MCF 10A (cell line): ENCODE measurements at regions of chr13 and their contacts with region 1.

Region 1: DNA sequence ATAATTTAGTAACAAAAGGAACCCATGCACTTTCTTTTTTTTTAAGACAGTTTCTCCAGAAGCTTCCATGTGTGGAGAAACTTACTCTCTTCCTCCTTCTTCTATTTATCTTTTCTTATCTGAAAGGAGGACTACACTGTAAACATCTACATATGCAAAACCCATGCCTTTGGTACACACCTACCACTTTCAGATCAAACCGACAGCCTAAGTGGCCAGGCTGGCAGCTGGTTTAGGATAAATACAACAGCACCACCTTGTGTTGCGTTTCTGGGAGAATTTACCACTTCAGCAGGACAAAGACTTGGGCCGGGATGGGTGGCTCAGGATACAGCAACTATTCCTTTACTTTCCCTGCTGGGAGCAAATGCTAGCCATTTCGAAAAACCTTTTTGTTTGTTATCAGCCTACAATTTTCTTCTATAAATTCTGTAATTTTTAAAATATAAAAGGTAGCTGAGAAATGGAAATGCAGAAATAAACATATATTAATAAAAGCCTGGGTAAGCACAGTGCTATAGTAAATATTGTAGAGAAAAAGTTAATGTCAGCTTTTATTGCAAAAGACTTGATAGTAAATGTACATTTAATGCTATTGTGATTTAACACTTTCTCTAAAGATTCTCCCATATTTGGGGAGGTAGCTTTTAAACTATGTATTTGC is 94.0 kb upstream of the RFC3 start:
- DNase-seq: peak; percentile 84
- H3K4me3 Mint-ChIP-seq: no peak overlapping the region
- H3K27ac Mint-ChIP-seq: no peak overlapping the region
- H3K4me1 Mint-ChIP-seq: peaks cover 15% of the 10 kb centered on the region
- H3K27me3 Mint-ChIP-seq: no peaks in the 10 kb centered on the region
- CTCF ChIP-seq: peak; percentile 78

Region 2: DNA sequence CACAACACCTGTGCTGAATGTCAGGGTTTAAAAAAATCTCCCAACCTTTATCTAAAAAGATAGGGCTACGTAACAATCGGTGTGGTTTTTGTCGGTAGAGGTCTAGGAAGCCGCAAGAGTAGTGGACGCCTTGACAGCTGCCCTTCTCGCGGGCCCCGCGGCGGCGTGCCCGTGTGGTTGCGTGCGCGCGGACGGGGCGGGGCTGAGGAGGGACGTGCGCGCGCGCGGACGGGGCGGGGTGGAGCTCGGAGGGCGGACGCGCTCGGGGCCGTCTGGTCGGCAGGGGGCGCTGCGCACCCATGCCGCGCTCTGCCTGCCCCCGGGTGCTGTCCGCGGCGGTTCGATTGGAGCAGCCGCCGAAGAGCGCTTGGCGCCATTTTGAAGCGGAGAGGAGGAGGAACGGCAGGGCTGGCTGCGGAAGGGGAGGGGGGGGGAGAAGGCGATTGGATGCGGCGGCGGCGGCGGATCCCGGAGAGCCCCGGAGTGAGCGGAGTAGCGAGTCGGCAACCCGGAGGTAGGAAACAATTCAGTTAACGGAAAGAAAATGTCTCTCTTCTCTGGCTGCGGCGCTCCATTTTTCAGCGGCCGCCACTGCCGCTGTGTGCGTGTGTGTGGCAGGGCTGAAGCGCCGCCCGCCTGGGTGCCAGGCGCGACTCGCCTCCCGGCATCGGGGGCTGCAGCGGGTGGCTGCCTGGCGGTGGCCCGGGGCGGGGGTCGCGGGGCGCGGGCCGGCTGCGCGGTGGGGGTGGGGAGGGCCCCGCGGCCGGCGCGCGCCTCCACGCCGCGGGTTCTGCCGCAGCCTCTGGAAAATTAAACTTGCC is 1137.6 kb before region 1 on chr13 and contains the start of gene PDS5B:
- CTCF ChIA-PET with region 1: no interaction called
- POLR2A ChIA-PET with region 1: no interaction called
- intact Hi-C with region 1: loop called (anchors 2 kb)
- DNase-seq: peak; percentile 92
- H3K4me3 Mint-ChIP-seq: peak within 1 kb of the TSS; percentile 86
- H3K27ac Mint-ChIP-seq: peak within 1 kb of the TSS; percentile 85
- H3K4me1 Mint-ChIP-seq: peaks cover 30% of the 10 kb centered on the region
- H3K27me3 Mint-ChIP-seq: no peaks in the 10 kb centered on the region
- CTCF ChIP-seq: peak; percentile 72
- total RNA-seq, gene PDS5B: 25.4 and 29.6 TPM in 2 replicates

Region 3: GRCh38 chr13:33312150-33312860 is 411.6 kb before region 1 on chr13:
- CTCF ChIA-PET with region 1: interaction called, 3 read pairs
- POLR2A ChIA-PET with region 1: no interaction called
- intact Hi-C with region 1: loop called (anchors 10 kb)
- DNase-seq: peak; percentile 54
- H3K4me3 Mint-ChIP-seq: no peak overlapping the region
- H3K27ac Mint-ChIP-seq: no peak overlapping the region
- H3K4me1 Mint-ChIP-seq: peaks cover 5% of the 10 kb centered on the region
- H3K27me3 Mint-ChIP-seq: no peaks in the 10 kb centered on the region
- CTCF ChIP-seq: peak; percentile 59

Region 4: GRCh38 chr13:33409673-33410510 is 314.0 kb before region 1 on chr13:
- CTCF ChIA-PET with region 1: no interaction called
- POLR2A ChIA-PET with region 1: no interaction called
- intact Hi-C with region 1: no loop called
- DNase-seq: no peak
- H3K4me3 Mint-ChIP-seq: no peak overlapping the region
- H3K27ac Mint-ChIP-seq: no peak overlapping the region
- H3K4me1 Mint-ChIP-seq: no peaks in the 10 kb centered on the region
- H3K27me3 Mint-ChIP-seq: no peaks in the 10 kb centered on the region
- CTCF ChIP-seq: no peak

Region 5: GRCh38 chr13:33606692-33607091 is 117.2 kb before region 1 on chr13:
- CTCF ChIA-PET with region 1: no interaction called
- POLR2A ChIA-PET with region 1: no interaction called
- intact Hi-C with region 1: loop called (anchors 2 kb)
- DNase-seq: no peak
- H3K4me3 Mint-ChIP-seq: no peak overlapping the region
- H3K27ac Mint-ChIP-seq: no peak overlapping the region
- H3K4me1 Mint-ChIP-seq: no peaks in the 10 kb centered on the region
- H3K27me3 Mint-ChIP-seq: no peaks in the 10 kb centered on the region
- CTCF ChIP-seq: no peak

Region 6: DNA sequence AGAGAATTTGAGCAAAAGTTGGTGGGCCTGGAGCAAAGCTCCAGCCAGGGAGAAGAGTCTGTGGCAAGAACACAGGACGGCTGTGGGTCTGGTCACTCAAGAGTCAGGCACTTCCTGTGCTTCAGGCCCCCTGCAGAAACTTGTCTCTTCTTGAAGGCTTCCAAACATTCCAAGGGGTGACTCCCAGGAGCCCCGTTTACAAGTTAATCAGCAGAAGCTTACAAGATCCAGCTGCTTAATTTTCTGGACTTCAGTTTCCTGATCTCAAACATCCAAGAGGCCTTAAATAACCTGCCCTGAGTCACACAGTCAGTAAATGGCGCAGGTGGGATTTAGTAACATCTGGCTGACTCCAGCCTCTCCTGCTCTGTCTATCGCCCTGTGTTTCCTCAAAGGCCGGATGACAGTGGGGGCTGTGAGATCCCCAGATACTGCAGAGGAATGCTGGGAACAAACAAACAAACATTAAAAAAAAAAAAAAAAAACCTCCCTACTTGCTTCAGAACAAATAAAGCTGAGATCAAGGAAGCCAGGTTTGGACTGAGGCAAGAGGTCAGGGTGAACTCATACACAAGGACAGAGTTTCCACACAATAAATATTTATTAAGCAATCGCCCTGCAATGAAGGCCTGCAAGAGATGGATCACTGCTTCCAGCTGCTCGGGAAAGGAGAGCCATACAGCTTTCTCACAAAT is 81.4 kb before region 1 on chr13:
- CTCF ChIA-PET with region 1: interaction called, 13 read pairs
- POLR2A ChIA-PET with region 1: interaction called, 3 read pairs
- intact Hi-C with region 1: loop called (anchors 10 kb)
- DNase-seq: peak; percentile 85
- H3K4me3 Mint-ChIP-seq: no peak overlapping the region
- H3K27ac Mint-ChIP-seq: peak overlapping the region; percentile 79
- H3K4me1 Mint-ChIP-seq: peaks cover 58% of the 10 kb centered on the region
- H3K27me3 Mint-ChIP-seq: no peaks in the 10 kb centered on the region
- CTCF ChIP-seq: no peak